ENCODE measurements at regions of chr5 and their contacts with region 1.

Region 1: DNA sequence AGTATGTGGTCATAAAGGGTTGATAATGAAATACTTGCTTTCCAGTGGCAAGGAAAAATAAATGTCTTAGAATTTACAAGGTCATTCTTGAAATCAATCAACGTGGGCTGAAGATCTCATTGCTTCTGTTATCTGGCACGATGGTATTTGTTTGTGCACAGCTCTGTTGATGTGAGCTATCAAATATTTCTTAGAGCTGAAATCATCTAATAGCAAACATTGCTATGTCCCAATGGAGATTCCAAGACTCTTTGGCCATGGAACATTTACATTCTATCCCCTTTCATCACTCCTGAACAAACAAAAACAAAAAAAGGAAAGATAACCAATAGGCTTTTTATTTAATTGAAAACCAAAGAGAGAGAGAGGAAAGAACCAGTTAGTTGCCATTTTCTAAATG is 111.5 kb upstream of the CCDC152 start:
- DNase-seq: no peak
- H3K4me3 ChIP-seq: no peak overlapping the region
- H3K27ac ChIP-seq: no peak overlapping the region
- H3K4me1 ChIP-seq: no peaks in the 10 kb centered on the region
- H3K27me3 ChIP-seq: no peaks in the 10 kb centered on the region
- CTCF ChIP-seq: no peak
- POLR2A ChIP-seq: no peak

Region 2: GRCh38 chr5:42593591-42593990 is 51.5 kb before region 1 on chr5:
- intact Hi-C with region 1: loop called (anchors 2 kb)
- DNase-seq: no peak
- H3K4me3 ChIP-seq: no peak overlapping the region
- H3K27ac ChIP-seq: no peak overlapping the region
- H3K4me1 ChIP-seq: peaks cover 0 to 9% of the 10 kb centered on the region in 2 donors
- H3K27me3 ChIP-seq: no peaks in the 10 kb centered on the region
- CTCF ChIP-seq: no peak
- POLR2A ChIP-seq: no peak

Region 3: DNA sequence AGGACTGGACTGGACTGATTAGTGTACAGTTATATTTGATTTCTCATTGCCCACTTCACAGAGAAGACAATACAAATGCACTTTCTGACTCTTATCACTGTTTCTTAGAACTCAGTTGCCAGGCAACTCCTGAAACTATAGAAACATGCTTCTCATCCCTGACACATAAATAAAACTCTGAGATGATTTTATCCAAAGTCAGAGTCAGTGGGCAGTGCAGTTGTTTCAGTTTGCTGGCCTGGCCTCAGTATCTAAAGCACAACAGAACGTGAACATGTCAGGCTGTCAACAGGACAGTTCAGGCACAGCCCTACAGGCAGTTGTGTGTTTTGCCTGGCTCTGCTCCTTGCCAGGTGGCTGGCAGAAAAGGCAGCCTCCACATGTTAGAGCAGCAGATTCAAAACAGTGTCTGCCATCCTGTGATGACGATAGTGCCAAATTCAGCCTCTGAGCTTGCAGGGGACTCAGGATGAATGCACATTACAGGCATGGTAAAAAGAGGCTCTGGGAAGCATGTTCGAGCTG is 46.3 kb after region 1 on chr5:
- intact Hi-C with region 1: no loop called
- DNase-seq: peak in 1 of 2 donors; percentile 19
- H3K4me3 ChIP-seq: no peak overlapping the region
- H3K27ac ChIP-seq: peak overlapping the region in 1 of 2 donors; percentile 35
- H3K4me1 ChIP-seq: no peaks in the 10 kb centered on the region
- H3K27me3 ChIP-seq: no peaks in the 10 kb centered on the region
- CTCF ChIP-seq: no peak
- POLR2A ChIP-seq: no peak

Region 4: GRCh38 chr5:43973318-43973717 is 1328.2 kb after region 1 on chr5:
- intact Hi-C with region 1: no loop called
- DNase-seq: no peak
- H3K4me3 ChIP-seq: no peak overlapping the region
- H3K27ac ChIP-seq: no peak overlapping the region
- H3K4me1 ChIP-seq: no peaks in the 10 kb centered on the region
- H3K27me3 ChIP-seq: no peaks in the 10 kb centered on the region
- CTCF ChIP-seq: no peak
- POLR2A ChIP-seq: no peak